WTC11 (cell line): ENCODE measurements at regions of chr17 and their contacts with region 1.

Region 1: DNA sequence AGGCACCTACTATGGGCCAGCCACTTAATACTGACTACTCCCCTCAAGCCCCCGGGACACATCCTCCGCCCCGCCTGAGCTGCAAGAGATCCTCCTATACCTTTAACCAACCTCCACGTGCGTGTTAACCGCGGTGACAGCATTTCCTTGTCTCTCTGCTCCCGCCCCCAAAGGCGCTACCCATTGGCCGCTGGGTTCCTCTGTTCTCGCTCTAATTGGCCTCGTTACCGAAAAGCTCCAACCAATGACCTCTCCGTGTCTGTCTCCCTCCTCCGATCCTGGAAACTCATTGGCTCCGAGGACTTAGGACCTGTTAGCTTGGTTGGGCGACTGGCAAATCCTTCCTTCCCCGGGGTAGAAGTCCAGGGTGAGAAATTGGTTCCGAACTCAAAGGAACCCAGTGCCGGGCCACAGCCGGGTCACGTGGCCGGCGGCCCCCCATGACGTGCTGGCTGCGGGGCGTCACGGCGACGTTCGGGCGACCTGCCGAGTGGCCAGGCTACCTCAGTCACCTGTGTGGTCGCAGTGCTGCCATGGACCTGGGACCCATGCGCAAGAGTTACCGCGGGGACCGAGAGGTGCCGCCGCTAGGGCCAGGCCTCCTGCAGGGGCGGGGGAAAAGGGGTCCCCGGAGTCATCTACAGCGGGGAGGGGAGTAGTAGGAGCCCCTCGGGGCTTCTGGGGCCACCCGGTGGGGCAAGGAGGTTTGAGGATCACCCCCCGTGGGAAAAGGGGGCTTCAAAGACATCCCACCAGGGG is at the start of gene PNPO:
- DNase-seq: peak; percentile 90
- ATAC-seq: peak; percentile 99
- H3K4me3 Mint-ChIP-seq: peak within 1 kb of the TSS; percentile 80
- H3K27ac Mint-ChIP-seq: no peak within 1 kb of the TSS
- H3K4me1 Mint-ChIP-seq: peaks cover 14% of the 10 kb centered on the region
- H3K27me3 Mint-ChIP-seq: peaks cover 30% of the 10 kb centered on the region
- CTCF ChIP-seq: no peak
- total RNA-seq, gene PNPO: 12.2 to 17.8 TPM (median 17.2 TPM) in 3 replicates

Region 2: GRCh38 chr17:47957591-47958428 is 16.4 kb after region 1 on chr17 and contains the start of gene PRR15L:
- CTCF ChIA-PET with region 1: interaction called, 37 read pairs
- POLR2A ChIA-PET with region 1: interaction called, 3 read pairs
- DNase-seq: peak; percentile 66
- ATAC-seq: peak; percentile 80
- H3K4me3 Mint-ChIP-seq: peak within 1 kb of the TSS; percentile 45
- H3K27ac Mint-ChIP-seq: peak within 1 kb of the TSS; percentile 70
- H3K4me1 Mint-ChIP-seq: peaks cover 29% of the 10 kb centered on the region
- H3K27me3 Mint-ChIP-seq: peaks cover 15% of the 10 kb centered on the region
- CTCF ChIP-seq: no peak
- total RNA-seq, gene PRR15L: 0.59 to 1.1 TPM (median 1.1 TPM) in 3 replicates

Region 3: GRCh38 chr17:48074315-48075081 is 133.1 kb after region 1 on chr17:
- CTCF ChIA-PET with region 1: no interaction called
- POLR2A ChIA-PET with region 1: no interaction called
- DNase-seq: peak; percentile 80
- ATAC-seq: peak; percentile 67
- H3K4me3 Mint-ChIP-seq: no peak overlapping the region
- H3K27ac Mint-ChIP-seq: peak overlapping the region; percentile 55
- H3K4me1 Mint-ChIP-seq: no peaks in the 10 kb centered on the region
- H3K27me3 Mint-ChIP-seq: no peaks in the 10 kb centered on the region
- CTCF ChIP-seq: peak; percentile 35; the same call in 1 of the 2 replicates

Region 4: GRCh38 chr17:48123111-48123510 is 181.7 kb after region 1 on chr17:
- CTCF ChIA-PET with region 1: no interaction called
- POLR2A ChIA-PET with region 1: no interaction called
- DNase-seq: no peak
- ATAC-seq: peak; percentile 76
- H3K4me3 Mint-ChIP-seq: no peak overlapping the region
- H3K27ac Mint-ChIP-seq: peak overlapping the region; percentile 86; the same call in 1 of the 2 replicates
- H3K4me1 Mint-ChIP-seq: no peaks in the 10 kb centered on the region
- H3K27me3 Mint-ChIP-seq: no peaks in the 10 kb centered on the region
- CTCF ChIP-seq: no peak